Activated T-helper 2 cell treated with anti-CD3 and anti-CD28 coated beads, Interferon-gamma antibody, Interleukin-2, Interleukin-4, amounts not matched to agents 10 μg/mL and 5 μg/mL and 100 μg/mL, durations not matched to agents 14 hours and 24 hours and 36 hours (primary cell): ENCODE measurements at regions of chr13 and their contacts with region 1.

Region 1: DNA sequence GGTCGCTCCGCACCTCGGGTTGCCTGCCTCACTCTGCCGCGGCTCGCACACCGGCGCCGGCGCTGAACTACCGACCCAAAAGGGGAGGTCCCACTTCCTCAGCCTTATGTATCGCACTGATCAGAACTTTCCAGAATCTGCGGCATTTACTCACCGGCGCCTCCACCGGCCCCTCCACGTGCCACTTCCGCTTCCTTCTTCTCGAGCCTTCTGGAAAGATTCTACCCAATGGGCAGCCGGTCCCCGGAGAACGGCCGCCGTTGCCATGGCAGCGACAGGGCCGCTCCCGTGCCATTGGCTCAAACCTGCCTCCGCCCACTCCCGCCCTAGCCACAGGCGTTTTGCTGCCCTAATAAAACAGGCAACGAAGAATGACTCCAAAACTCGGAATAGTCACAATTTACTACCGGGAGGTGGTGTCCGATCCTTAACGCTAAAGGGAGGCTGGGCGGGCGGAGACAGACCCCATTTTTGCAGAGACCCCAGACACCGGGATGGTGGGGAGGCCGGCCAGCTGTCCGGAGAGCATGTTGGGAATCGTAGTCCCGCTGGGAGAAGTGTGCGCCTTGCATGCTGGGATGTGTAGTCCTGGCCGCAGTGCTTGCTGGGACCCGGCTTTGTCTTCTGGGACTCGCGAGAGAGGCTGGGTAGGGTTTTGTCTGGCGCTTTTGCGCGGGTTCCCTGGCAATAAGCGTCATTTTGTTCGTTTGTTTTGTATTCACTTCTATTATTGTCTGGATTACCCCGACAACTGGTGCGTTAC is at the start of gene HSPH1:
- DNase-seq: peak; percentile 98
- H3K4me3 Mint-ChIP-seq: peak within 1 kb of the TSS; percentile 95
- H3K27ac Mint-ChIP-seq: peak within 1 kb of the TSS; percentile 97
- H3K4me1 Mint-ChIP-seq: peaks cover 41% of the 10 kb centered on the region
- H3K27me3 Mint-ChIP-seq: no peaks in the 10 kb centered on the region
- total RNA-seq, gene HSPH1: 269 and 274 TPM in 2 replicates

Region 2: DNA sequence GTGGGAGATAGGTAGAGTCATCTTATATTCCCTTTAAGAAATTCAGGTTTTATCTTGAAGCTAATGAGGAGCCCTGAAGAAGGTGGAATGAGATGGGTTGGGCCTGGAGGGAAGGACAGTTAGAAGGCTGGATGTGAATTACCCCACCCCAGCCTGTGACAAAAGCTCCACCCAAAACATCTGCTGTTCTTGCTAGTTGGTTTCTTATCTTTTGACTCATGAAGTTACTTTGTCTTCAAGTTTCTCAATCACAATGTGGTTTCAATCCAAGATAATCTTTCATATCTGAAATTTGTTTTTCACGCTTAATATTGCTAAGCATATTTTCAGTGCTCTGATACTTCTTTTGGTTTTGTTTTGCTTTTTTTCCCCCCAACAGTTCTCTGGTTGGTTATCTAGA is 657.9 kb before region 1 on chr13:
- intact Hi-C with region 1: no loop called
- DNase-seq: peak; percentile 44
- H3K4me3 Mint-ChIP-seq: no peak overlapping the region
- H3K27ac Mint-ChIP-seq: peak overlapping the region; percentile 39
- H3K4me1 Mint-ChIP-seq: peaks cover 17% of the 10 kb centered on the region
- H3K27me3 Mint-ChIP-seq: peaks cover 1% of the 10 kb centered on the region

Region 3: GRCh38 chr13:31073859-31074718 is 87.9 kb before region 1 on chr13:
- intact Hi-C with region 1: loop called (anchors 5 kb)
- DNase-seq: peak; percentile 13
- H3K4me3 Mint-ChIP-seq: no peak overlapping the region
- H3K27ac Mint-ChIP-seq: peak overlapping the region; percentile 11
- H3K4me1 Mint-ChIP-seq: peaks cover 8% of the 10 kb centered on the region
- H3K27me3 Mint-ChIP-seq: no peaks in the 10 kb centered on the region

Region 4: GRCh38 chr13:31131470-31131961 is 30.5 kb before region 1 on chr13:
- intact Hi-C with region 1: loop called (anchors 2 kb)
- DNase-seq: no peak
- H3K4me3 Mint-ChIP-seq: no peak overlapping the region
- H3K27ac Mint-ChIP-seq: peak overlapping the region; percentile 34
- H3K4me1 Mint-ChIP-seq: peaks cover 34% of the 10 kb centered on the region
- H3K27me3 Mint-ChIP-seq: peaks cover 9% of the 10 kb centered on the region